Panc1 (cell line): ENCODE measurements at regions of chr17 and their contacts with region 1.

Region 1: DNA sequence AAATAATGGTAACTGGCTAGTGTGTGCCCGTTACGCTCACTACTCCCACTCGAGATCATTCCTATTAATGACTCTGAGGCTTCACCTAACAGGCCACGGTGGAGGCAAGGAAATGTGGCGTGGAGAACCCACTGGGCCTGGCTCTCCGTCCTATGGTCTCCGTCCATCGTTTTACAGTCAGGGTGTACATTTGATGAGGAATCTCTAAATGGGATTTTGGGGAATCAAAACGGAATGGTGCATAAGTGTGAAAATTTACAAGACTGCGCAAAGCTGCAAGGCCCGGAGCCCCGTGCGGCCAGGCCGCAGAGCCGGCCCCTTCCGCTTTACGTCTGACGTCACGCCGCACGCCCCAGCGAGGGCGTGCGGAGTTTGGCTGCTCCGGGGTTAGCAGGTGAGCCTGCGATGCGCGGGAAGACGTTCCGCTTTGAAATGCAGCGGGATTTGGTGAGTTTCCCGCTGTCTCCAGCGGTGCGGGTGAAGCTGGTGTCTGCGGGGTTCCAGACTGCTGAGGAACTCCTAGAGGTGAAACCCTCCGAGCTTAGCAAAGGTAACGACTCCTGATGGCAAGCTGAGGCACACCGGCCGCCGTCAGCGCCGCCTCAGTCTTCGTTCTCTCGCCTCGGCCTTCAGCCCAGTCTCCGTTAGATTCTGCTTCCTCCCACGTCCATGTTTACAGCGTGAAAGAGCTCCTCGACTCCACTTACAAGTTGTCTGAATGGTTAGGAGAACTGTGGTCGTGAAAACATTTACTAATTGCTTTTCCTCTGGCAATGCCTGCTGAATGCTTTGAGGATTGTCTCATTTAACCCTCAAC is at the start of gene RAD51C:
- DNase-seq: peak; percentile 48
- ATAC-seq: peak; percentile 100
- H3K4me3 ChIP-seq: peak within 1 kb of the TSS; percentile 68 to 88
- H3K27ac ChIP-seq: peak within 1 kb of the TSS; percentile 91
- H3K4me1 ChIP-seq: peaks cover 3% of the 10 kb centered on the region
- H3K27me3 ChIP-seq: no peaks in the 10 kb centered on the region
- CTCF ChIP-seq: no peak
- total RNA-seq, gene RAD51C: 19.9 TPM

Region 2: GRCh38 chr17:58517734-58518609 is 174.5 kb before region 1 on chr17:
- CTCF ChIA-PET with region 1: no interaction called
- POLR2A ChIA-PET with region 1: interaction called, 10 read pairs
- in situ Hi-C with region 1: no loop called
- intact Hi-C with region 1: no loop called
- DNase-seq: peak; percentile 93
- ATAC-seq: peak; percentile 90
- H3K4me3 ChIP-seq: peak overlapping the region; percentile 87 to 95
- H3K27ac ChIP-seq: peak overlapping the region; percentile 82
- H3K4me1 ChIP-seq: peaks cover 9% of the 10 kb centered on the region; the same call in 1 of the 2 replicates
- H3K27me3 ChIP-seq: no peaks in the 10 kb centered on the region
- CTCF ChIP-seq: no peak

Region 3: DNA sequence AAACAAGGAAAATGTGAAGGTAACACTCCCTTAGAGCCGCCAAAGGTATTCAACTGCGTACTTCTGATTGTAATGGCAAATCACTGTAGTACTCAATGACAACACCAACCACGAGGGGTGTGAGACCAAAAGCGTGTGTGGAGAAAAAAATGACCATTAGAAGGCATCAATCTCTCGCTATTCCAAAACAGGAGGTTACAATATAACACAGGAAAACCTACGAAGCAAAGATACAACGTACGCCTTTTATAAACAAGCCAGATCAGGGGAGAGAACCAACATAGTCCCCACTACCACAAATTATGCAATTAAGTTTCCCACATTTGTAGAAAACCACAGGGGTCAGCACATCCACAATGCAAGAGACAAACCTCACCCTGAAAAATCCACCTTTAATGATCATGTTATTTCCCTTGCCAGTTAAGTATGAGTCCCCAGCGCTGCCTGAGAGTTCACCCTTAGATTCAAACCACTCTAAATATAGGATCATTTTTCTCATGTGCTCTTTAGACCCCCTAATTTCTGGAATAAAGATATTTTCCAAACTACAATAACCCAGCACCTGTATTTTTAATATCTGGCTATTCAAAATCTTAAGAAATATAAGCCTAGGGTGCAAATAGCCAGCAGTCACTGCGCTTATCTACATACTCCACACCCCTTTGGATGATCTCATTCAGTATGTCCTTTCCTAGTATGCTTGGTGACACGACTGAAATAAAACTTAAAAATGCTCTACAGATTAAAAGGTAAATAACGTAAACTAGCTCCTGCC is 13.0 kb before region 1 on chr17:
- CTCF ChIA-PET with region 1: no interaction called
- POLR2A ChIA-PET with region 1: no interaction called
- in situ Hi-C with region 1: no loop called
- intact Hi-C with region 1: no loop called
- DNase-seq: peak; percentile 75
- ATAC-seq: peak; percentile 91
- H3K4me3 ChIP-seq: no peak overlapping the region
- H3K27ac ChIP-seq: peak overlapping the region; percentile 54; the same call in 1 of the 2 replicates
- H3K4me1 ChIP-seq: peaks cover 9% of the 10 kb centered on the region; the same call in 1 of the 2 replicates
- H3K27me3 ChIP-seq: no peaks in the 10 kb centered on the region
- CTCF ChIP-seq: no peak

Region 4: GRCh38 chr17:58808645-58809563 is 116.5 kb after region 1 on chr17:
- CTCF ChIA-PET with region 1: no interaction called
- POLR2A ChIA-PET with region 1: interaction called, 11 read pairs
- in situ Hi-C with region 1: no loop called
- intact Hi-C with region 1: no loop called
- DNase-seq: no peak
- ATAC-seq: no peak
- H3K4me3 ChIP-seq: no peak overlapping the region
- H3K27ac ChIP-seq: no peak overlapping the region
- H3K4me1 ChIP-seq: no peaks in the 10 kb centered on the region
- H3K27me3 ChIP-seq: no peaks in the 10 kb centered on the region; the same call in 1 of the 2 replicates
- CTCF ChIP-seq: no peak